ENCODE measurements at regions of chr1 and their contacts with region 1.

Region 1: DNA sequence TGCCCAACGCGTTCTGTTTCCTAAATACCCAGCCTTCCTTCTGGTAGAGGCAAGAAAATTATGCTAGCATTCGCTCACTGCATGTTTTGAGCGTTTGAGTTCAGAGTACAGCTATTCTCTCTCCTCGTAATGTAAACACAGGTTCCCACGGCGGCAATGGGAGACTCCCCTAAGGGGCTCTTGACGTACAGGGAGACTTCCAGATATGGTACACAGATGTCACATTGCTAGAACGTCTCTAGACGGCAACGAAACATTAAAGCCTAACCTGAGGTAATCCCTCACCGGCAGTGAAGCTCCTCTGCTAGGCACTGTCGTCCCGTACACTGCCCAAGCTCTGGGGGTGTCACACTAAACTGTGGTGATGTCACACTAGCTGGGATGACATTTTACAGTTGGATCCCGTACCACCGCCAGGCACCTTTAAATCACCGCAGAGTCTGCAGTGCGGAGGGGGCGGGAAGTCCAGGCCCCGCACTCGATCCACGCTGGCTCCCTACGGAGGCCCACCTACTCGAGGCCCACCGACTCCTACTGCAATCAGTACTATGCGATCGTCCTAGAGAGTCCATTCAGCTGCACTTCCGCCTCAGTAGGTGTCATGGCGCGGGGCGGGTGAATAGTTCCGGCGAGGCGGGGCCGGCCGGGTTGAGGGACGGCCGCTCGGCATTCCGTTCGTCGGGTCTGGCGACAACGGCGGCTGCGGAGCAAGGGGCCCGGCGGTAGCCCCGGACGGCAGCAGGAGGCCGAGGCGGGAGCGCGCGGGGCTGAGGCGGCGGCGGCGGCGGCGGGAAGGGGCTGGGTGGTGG is at the start of gene HIPK1:
- DNase-seq: peak; percentile 86 to 88
- ATAC-seq: peak; percentile 88 to 89
- H3K4me3 ChIP-seq: peak within 1 kb of the TSS; percentile 86 to 98 (median 90)
- H3K27ac ChIP-seq: peak within 1 kb of the TSS; percentile 92 to 98 (median 94)
- H3K4me1 ChIP-seq: peaks cover 45% of the 10 kb centered on the region in 2 donors
- H3K27me3 ChIP-seq: no peaks in the 10 kb centered on the region
- CTCF ChIP-seq: peak in 1 of 5 experiments; percentile 28
- POLR2A ChIP-seq: peak; percentile 79 to 82
- total RNA-seq, gene HIPK1: 54.4 to 67.6 (median 60.0) TPM

Region 2: DNA sequence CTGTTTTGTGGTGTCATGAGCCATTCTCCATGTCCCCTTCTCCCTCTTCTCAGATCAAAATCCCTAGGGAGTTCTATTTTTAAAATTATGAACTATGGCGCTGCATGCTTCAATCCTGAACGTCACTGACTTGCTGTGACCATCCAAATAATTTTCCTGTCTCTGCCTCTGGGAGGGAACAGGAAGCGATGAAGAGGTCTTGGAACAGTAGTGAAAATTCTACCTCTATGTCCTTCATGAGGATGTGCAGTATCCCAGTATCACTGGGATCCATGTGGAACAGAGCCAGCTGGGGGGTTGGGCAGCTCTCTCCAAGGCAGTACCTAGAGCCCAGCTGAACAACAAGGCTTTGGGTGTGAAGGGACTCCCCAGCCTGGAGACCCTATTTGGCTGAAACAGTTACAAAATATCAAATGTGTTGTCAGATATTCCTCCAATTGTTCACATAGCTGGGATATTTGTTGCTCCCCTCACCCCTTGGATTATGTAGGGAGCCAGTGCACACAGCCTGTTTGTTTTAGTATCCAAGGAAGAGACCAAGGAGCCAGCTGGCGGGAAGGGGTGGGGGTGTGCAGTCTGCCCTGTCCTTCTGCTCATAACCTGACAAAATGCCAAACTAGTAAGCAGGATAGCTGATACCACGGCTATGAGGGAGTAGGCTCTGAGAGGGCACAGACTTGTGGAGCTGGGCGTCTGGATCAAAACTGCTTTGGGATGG is 16.4 kb before region 1 on chr1:
- in situ Hi-C with region 1: no loop called
- intact Hi-C with region 1: loop called (anchors 2 kb)
- DNase-seq: peak in 1 of 2 donors; percentile 34
- ATAC-seq: peak; percentile 73 to 88
- H3K4me3 ChIP-seq: peak overlapping the region in 2 of 4 donors; percentile 4 to 15
- H3K27ac ChIP-seq: peak overlapping the region; percentile 67 to 73 (median 72)
- H3K4me1 ChIP-seq: peaks cover 17 to 18% of the 10 kb centered on the region in 2 donors
- H3K27me3 ChIP-seq: no peaks in the 10 kb centered on the region
- CTCF ChIP-seq: no peak
- POLR2A ChIP-seq: no peak

Measured in gastrocnemius medialis (tissue), 4 donors.